ENCODE measurements at regions of chr2 and their contacts with region 1.

Region 1: DNA sequence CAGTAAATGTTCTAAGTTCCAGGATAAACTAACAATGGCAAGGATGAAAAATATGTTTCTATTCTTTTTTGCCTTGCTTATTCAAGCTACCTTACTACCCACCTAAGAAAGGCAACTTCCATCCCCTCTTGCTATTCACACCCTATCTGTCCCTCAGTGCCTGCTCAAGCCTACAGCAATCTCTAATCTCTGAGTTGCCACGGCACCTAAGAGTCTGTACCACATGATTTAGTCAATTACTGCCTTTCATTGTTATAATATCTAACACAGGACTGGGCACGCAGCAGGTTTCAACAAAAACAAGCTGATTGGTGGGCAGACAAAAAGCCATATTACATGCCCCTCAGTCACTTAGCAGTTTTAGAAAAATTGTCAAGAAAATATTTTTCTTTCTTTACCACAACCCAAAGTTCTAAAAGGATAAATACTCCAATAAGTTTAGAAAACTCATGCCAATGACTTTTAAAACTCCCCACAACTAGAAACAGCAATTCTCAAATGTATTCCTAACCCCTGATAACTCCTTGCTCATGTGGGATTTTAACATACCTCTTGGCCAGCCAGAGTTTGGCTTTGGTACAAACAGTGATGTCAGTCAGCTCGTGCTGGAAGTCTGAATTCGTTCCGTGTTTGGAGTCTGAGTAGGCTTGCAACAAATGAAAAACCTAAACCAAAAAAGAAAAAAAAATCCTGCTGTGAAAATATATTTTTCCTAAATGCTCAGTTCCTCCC is 117.3 kb upstream of the ZFP36L2 start:
- DNase-seq: peak; percentile 94
- H3K4me3 ChIP-seq: no peak overlapping the region
- H3K27ac ChIP-seq: peak overlapping the region; percentile 85 to 92 (median 86)
- H3K4me1 ChIP-seq: peaks cover 0 to 90% (median 88%) of the 10 kb centered on the region in 4 donors
- H3K27me3 ChIP-seq: no peaks in the 10 kb centered on the region
- CTCF ChIP-seq: no peak
- EP300 ChIP-seq: peak in 1 of 4 donors; percentile 37
- POLR2A ChIP-seq: no peak

Region 2: GRCh38 chr2:43251171-43251731 is 92.5 kb before region 1 on chr2:
- intact Hi-C with region 1: loop called (anchors 5 kb)
- DNase-seq: no peak
- H3K4me3 ChIP-seq: no peak overlapping the region
- H3K27ac ChIP-seq: peak overlapping the region; percentile 84 to 93 (median 88)
- H3K4me1 ChIP-seq: peaks cover 0 to 44% (median 31%) of the 10 kb centered on the region in 4 donors
- H3K27me3 ChIP-seq: no peaks in the 10 kb centered on the region
- CTCF ChIP-seq: no peak
- EP300 ChIP-seq: no peak
- POLR2A ChIP-seq: no peak

Region 3: DNA sequence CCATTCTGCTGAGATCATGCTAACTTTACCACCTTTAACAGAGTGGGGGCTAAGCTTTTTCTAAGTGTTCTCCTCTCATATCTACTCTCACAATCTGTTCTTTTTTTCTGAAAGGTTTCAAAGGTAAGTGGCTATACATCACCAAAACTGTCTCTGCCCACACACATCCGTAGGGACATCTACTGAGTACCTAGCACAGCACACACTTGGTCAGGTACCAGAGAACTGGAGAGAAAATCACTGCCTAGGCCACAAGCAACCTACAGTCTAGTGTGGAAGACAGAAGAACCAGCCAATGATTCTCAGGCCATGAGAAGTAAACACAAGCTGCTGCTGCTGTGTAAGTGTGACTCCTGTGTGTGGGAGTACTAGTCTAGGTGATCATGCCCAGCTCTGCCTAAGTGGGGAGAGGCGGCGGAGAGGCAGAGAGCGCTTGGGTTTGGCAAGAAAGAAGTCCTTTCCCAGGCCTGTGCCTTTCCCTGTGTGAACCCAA is 58.8 kb after region 1 on chr2:
- intact Hi-C with region 1: loop called (anchors 5 kb)
- DNase-seq: no peak
- H3K4me3 ChIP-seq: no peak overlapping the region
- H3K27ac ChIP-seq: peak overlapping the region in 2 of 4 donors; percentile 40 to 84
- H3K4me1 ChIP-seq: peaks cover 0 to 84% (median 39%) of the 10 kb centered on the region in 4 donors
- H3K27me3 ChIP-seq: no peaks in the 10 kb centered on the region
- CTCF ChIP-seq: no peak
- EP300 ChIP-seq: no peak
- POLR2A ChIP-seq: no peak

Region 4: DNA sequence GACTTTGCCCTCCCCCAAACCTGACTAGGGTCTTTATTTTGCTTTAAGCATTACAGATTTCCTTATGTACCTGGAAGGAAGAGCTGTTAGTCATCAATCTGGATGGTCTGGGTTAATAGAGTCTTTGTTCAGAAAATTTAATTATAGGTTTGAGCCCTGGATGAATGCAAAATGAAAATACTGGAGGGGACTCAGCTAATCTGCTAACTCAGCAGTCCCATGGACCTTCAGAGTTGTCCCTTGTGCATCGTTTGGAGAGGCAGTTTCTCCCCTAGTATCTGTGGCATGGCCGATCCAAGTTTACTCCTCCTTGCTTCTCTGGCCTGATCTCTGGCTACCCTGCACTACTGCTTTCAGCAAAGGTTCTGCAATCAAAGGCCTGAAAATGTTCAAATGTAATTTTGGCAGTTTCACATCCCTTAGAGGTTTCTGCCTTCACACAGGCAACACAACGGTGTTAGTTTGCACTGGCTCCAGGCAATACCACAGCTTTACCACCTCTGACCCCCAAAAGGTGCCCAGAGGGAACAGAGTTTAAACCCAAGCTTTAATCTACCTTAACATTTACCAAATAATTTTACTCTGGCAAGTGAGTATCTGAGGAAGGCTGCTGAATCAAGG is 117.8 kb after region 1 on chr2:
- intact Hi-C with region 1: loop called (anchors 5 kb)
- DNase-seq: no peak
- H3K4me3 ChIP-seq: no peak overlapping the region
- H3K27ac ChIP-seq: peak overlapping the region; percentile 7 to 71 (median 64)
- H3K4me1 ChIP-seq: peaks cover 0 to 93% (median 77%) of the 10 kb centered on the region in 4 donors
- H3K27me3 ChIP-seq: no peaks in the 10 kb centered on the region
- CTCF ChIP-seq: no peak
- EP300 ChIP-seq: no peak
- POLR2A ChIP-seq: no peak

Region 5: GRCh38 chr2:43519643-43520221 is 176.0 kb after region 1 on chr2:
- intact Hi-C with region 1: loop called (anchors 10 kb)
- DNase-seq: no peak
- H3K4me3 ChIP-seq: no peak overlapping the region
- H3K27ac ChIP-seq: peak overlapping the region; percentile 63 to 83 (median 82)
- H3K4me1 ChIP-seq: peaks cover 0 to 67% (median 64%) of the 10 kb centered on the region in 4 donors
- H3K27me3 ChIP-seq: no peaks in the 10 kb centered on the region
- CTCF ChIP-seq: no peak
- EP300 ChIP-seq: no peak
- POLR2A ChIP-seq: no peak

Region 6: DNA sequence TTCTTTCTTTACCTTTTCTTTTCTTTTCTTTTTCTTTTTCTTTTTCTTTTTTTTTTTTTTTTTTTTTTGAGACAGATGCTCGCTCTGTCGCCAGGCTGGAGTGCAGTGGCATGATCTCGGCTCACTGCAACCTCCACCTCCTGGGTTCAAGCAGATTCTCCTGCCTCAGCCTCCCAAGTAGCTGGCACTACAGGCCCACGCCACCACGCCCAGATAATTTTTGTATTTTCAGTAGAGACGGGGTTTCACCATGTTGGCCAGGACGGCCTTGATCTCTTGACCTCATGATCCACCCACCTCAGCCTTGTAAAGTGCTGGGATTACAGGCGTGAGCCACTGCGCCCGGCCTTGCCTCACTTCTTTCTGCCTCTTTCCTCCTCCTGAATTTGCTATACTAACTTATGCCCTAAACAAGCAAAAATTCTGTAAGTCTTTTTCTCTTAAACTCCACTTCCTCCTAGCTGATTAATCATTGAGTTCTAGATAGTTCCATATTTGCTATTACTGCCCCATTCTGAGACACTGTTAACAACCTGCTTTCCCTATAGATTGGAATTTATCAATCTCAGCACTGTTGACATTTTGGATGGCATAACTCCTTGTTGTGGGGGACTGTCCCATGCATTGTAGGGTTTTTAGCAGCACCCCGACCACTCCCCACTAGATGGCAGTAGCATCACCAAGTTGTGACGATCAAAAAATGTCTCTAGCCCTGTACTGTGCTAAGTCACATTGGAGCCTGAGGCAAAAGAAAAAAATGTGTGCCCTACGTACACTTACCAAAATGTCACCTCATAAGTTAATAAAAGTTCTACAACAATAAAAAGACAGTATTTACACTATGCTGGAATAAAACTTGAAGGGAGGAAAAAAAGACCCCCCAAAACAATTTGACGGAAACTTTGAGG is 268.5 kb after region 1 on chr2:
- intact Hi-C with region 1: no loop called
- DNase-seq: peak; percentile 80
- H3K4me3 ChIP-seq: no peak overlapping the region
- H3K27ac ChIP-seq: peak overlapping the region in 3 of 4 donors; percentile 11 to 48 (median 18)
- H3K4me1 ChIP-seq: peaks cover 0 to 4% (median 0%) of the 10 kb centered on the region in 4 donors
- H3K27me3 ChIP-seq: no peaks in the 10 kb centered on the region
- CTCF ChIP-seq: peak; percentile 59 to 72 (median 69)
- EP300 ChIP-seq: no peak
- POLR2A ChIP-seq: no peak

Region 7: GRCh38 chr2:44686561-44686960 is 1342.8 kb after region 1 on chr2:
- intact Hi-C with region 1: no loop called
- DNase-seq: no peak
- H3K4me3 ChIP-seq: no peak overlapping the region
- H3K27ac ChIP-seq: no peak overlapping the region
- H3K4me1 ChIP-seq: no peaks in the 10 kb centered on the region
- H3K27me3 ChIP-seq: no peaks in the 10 kb centered on the region
- CTCF ChIP-seq: no peak
- EP300 ChIP-seq: no peak
- POLR2A ChIP-seq: no peak

Measured in sigmoid colon (tissue), 7 donors.